ENCODE measurements at regions of chr2 and their contacts with region 1.

Region 1: DNA sequence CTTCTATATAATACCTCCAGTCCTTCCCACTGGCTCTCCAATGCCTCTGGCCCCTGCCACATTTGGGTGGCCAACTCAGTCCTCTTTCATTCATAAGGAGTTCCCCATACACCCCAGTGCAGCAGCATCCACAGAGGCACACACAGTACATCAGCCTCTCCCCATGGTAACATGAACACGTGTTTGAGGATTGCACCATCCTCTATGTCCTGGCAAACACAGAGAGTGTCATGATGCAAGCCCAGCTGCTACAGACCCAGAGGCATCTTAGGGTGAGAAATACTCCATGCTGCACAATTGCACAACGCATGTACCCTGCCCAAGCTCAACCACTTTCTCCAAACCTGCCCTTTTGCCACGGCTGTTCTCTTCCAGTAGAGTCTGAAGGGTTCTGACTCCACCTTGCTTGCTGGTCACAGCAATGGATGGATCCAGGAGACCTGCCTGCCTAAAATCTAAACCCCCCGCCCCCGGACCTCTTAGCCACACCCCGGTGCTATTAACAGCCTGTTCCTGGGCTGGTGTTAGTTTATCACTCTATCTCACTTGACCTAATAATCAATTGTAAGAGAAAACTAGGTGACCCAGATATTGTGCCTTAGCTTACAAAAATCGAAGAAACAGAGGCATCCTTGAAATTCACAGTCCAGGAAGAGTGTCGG is 11.4 kb downstream of the IGFBP5 start:
- DNase-seq: peak; percentile 74
- ATAC-seq: peak; percentile 69 to 82

Region 2: DNA sequence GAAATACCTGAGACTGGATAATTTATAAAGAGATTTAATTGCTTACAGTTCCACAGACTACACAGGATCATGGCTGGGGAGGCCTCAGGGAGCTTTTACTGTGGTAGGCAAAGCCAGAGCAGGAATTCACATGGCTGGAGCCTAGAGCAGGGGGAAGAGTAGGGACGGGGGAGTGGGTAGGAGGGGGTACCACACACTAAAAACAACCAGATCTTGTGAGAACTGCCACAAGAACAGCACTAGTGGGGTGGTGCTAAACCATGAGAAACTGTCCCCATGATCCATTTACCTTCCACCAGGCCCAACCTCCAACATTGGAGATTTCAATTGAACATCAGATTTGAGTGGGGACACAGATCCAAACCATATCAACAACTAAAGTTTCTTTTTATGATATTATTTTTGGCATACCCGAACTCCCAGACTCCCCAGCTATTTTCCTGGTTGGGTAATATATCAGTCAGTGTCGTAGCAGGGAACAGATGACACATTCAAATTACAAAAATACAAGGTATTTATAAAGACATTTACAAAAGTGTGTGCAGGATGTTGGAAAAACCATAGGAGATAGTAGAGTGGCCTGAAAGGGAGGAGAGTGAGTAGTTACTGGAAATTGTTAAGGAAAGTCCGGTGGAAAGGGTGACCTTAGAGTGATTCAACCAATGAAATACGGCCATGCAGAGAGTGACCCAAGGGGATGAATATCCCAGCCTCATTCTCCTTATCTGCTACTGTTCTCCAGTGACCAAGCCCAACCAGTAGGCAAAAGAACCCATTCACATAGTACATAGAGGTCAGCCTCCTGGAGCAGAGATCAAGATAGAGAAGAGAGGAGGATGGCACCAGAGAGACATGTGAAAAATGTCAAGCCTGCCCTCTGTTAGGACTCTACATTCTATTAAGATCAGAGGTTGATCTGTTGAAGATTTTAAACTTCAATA is 176.5 kb before region 1 on chr2:
- intact Hi-C with region 1: no loop called
- DNase-seq: no peak
- ATAC-seq: peak in 1 of 2 donors; percentile 17

Region 3: DNA sequence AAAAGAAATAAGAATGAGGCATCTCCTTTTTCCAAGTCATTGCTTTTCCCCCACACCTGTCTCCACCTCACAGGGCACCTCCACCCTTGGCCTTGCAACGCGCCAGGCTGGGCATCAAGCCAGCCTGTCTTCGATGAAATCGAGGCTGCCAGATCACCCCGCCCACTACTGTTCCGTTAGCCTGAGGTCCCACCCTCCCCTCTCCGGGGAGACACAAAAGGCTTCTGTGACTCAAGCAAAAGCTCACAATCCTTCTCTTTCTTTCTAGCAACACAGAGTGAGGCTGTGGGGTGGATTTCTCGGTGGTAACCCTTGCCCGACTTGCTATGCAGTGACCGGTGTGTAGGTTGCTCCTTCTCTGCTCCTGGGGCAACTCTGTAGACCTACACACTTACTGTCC is 166.0 kb after region 1 on chr2:
- intact Hi-C with region 1: no loop called
- DNase-seq: peak; percentile 73
- ATAC-seq: peak; percentile 82 to 88

Region 4: DNA sequence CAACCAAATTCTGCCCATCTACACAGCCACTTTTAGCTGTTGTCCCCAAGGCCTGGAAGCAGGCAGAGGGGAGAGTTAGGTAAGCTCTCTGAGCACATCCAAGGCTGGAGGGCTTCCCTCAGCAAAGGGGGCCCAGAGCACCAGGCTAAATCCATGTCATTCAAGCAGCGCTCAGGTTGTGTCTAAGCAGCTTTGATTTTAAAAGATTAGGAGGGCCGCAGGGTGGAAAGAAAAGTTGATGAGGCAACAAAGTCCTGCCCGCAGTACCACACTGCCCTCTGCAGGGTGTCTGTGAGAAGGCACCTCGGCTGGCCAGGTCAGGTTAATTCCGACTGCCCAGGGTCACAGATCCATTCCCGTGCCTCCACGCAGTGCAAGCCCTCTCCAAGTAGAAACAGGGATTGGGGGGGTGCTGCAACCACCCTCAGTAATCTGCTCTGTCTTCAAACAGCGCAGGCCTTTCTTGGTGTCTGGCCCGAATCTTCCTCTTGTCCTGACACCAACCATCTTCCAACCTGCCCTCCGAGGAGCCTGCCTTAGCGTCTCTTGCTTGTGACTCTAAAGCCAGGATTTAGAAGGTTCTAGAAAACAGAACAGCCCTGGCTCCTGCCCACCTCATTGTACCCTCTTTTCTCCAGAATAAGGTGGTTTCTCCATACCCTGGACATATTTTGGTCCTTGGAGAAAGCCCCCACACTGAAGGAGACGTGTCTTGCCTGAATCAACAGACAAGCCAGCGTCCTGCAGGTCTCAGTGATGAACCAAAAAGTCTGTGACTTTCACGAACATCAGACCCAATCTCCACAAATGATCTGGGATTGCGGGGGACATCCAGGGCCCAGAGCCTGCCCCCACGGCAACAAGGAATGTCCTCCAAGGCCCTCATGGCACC is 1029.7 kb after region 1 on chr2:
- intact Hi-C with region 1: loop called in 1 of 2 experiments (anchors 5 kb)
- DNase-seq: peak; percentile 76
- ATAC-seq: peak; percentile 82 to 84

Measured in left cardiac atrium (tissue), 4 donors.